ENCODE measurements at regions of chr15 and their contacts with region 1.

Region 1: GRCh38 chr15:76057332-76058000 is 2.3 kb upstream of the TMEM266 start:
- DNase-seq: peak in 7 of 9 donors; percentile 14 to 48 (median 36)
- ATAC-seq: peak; percentile 55
- H3K4me3 ChIP-seq: no peak overlapping the region
- H3K4me3 Mint-ChIP-seq: peak overlapping the region in 5 of 10 donors; percentile 19 to 69 (median 47)
- H3K27ac ChIP-seq: no peak overlapping the region
- H3K27ac Mint-ChIP-seq: peak overlapping the region in 1 of 9 donors; percentile 19
- H3K4me1 ChIP-seq: peaks cover 9 to 12% of the 10 kb centered on the region in 2 donors
- H3K4me1 Mint-ChIP-seq: peaks cover 6 to 31% (median 18%) of the 10 kb centered on the region in 7 donors
- H3K27me3 ChIP-seq: peaks cover 15 to 20% of the 10 kb centered on the region in 2 donors
- H3K27me3 Mint-ChIP-seq: peaks cover 48 to 65% (median 50%) of the 10 kb centered on the region in 5 donors

Region 2: DNA sequence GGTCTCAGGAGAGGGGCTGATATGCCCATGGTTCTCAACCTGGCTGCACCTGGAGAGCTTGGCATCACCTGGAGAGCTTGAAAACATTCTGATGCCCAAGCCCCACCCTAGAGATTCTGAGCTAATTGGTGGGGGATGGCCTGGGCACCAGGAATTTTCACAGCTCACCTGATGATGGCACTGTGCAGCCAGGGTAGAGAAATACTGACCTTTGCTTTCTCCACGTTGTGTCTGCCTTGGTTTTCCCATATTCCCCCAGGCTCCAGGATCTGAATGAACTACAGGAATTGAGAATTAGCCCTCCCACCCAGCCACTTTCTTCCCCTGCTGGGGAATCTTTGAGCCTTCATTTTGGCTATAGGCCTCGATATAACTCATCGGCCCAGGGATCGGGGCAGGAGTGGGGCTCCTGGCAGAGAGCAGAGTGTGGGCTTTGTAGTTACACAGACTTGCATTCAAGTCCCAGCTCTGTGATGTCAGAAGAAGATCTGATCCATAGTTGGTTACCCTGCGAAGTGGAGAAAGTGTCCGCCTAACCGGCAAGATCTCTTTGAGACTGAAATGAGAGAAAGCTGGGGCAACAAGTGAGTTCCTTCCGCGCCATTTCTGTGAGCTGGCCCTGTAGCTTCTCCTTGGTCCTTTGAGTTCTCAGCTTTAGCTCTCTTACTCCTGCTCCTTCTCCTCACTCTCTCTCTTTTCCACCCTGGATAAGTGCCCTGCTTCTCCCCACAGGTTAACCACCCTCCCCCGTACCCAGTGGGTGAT is 247.3 kb before region 1 on chr15:
- CTCF ChIA-PET with region 1: no interaction called
- POLR2A ChIA-PET with region 1: no interaction called
- intact Hi-C with region 1: loop called in 1 of 2 experiments (anchors 5 kb)
- DNase-seq: peak in 1 of 9 donors; percentile 12
- ATAC-seq: peak; percentile 38
- H3K4me3 ChIP-seq: no peak overlapping the region
- H3K4me3 Mint-ChIP-seq: no peak overlapping the region
- H3K27ac ChIP-seq: no peak overlapping the region
- H3K27ac Mint-ChIP-seq: peak overlapping the region in 1 of 9 donors; percentile 56
- H3K4me1 ChIP-seq: no peaks in the 10 kb centered on the region
- H3K4me1 Mint-ChIP-seq: no peaks in the 10 kb centered on the region
- H3K27me3 ChIP-seq: no peaks in the 10 kb centered on the region
- H3K27me3 Mint-ChIP-seq: peaks cover 0 to 21% (median 6%) of the 10 kb centered on the region in 5 donors

Region 3: DNA sequence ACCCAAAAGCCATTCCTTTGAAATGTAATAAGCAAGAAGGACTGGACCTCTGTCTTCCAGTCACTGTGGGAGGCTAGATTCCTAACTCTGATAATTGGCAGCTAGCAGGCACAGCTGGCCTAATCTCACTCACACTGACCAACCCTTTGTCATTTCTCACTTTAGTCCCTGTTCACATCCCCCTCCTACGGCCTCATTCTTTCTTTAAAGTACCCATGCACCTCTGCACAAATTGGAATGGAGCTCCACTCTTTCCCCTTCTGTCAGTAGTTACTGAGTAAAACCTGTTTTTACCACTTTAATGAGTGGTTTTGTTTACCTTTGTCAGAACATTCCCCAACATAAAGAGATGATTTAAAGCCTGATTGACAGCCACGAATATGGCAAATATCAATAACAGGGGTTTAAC is 225.9 kb before region 1 on chr15:
- CTCF ChIA-PET with region 1: no interaction called
- POLR2A ChIA-PET with region 1: no interaction called
- intact Hi-C with region 1: no loop called
- DNase-seq: no peak
- ATAC-seq: no peak
- H3K4me3 ChIP-seq: no peak overlapping the region
- H3K4me3 Mint-ChIP-seq: no peak overlapping the region
- H3K27ac ChIP-seq: no peak overlapping the region
- H3K27ac Mint-ChIP-seq: peak overlapping the region in 1 of 9 donors; percentile 52
- H3K4me1 ChIP-seq: no peaks in the 10 kb centered on the region
- H3K4me1 Mint-ChIP-seq: peaks cover 0 to 27% (median 4%) of the 10 kb centered on the region in 7 donors
- H3K27me3 ChIP-seq: no peaks in the 10 kb centered on the region
- H3K27me3 Mint-ChIP-seq: peaks cover 0 to 7% (median 0%) of the 10 kb centered on the region in 5 donors

Region 4: GRCh38 chr15:76139368-76140073 is 82.1 kb after region 1 on chr15:
- CTCF ChIA-PET with region 1: interaction called, 12 read pairs
- POLR2A ChIA-PET with region 1: no interaction called
- intact Hi-C with region 1: loop called (anchors 1 kb)
- DNase-seq: peak; percentile 38 to 67 (median 58)
- ATAC-seq: peak; percentile 90
- H3K4me3 ChIP-seq: no peak overlapping the region
- H3K4me3 Mint-ChIP-seq: no peak overlapping the region
- H3K27ac ChIP-seq: no peak overlapping the region
- H3K27ac Mint-ChIP-seq: no peak overlapping the region
- H3K4me1 ChIP-seq: no peaks in the 10 kb centered on the region
- H3K4me1 Mint-ChIP-seq: peaks cover 0 to 11% (median 0%) of the 10 kb centered on the region in 7 donors
- H3K27me3 ChIP-seq: no peaks in the 10 kb centered on the region
- H3K27me3 Mint-ChIP-seq: peaks cover 8 to 41% (median 14%) of the 10 kb centered on the region in 5 donors

Region 5: GRCh38 chr15:76150971-76151598 is 93.6 kb after region 1 on chr15:
- CTCF ChIA-PET with region 1: interaction called, 3 read pairs
- POLR2A ChIA-PET with region 1: no interaction called
- intact Hi-C with region 1: loop called in 1 of 2 experiments (anchors 2 kb)
- DNase-seq: peak; percentile 34 to 77 (median 58)
- ATAC-seq: peak; percentile 91
- H3K4me3 ChIP-seq: no peak overlapping the region
- H3K4me3 Mint-ChIP-seq: peak overlapping the region in 4 of 10 donors; percentile 11 to 43 (median 40)
- H3K27ac ChIP-seq: no peak overlapping the region
- H3K27ac Mint-ChIP-seq: no peak overlapping the region
- H3K4me1 ChIP-seq: peaks cover 0 to 4% of the 10 kb centered on the region in 2 donors
- H3K4me1 Mint-ChIP-seq: peaks cover 7 to 15% (median 11%) of the 10 kb centered on the region in 7 donors
- H3K27me3 ChIP-seq: no peaks in the 10 kb centered on the region
- H3K27me3 Mint-ChIP-seq: peaks cover 7 to 21% (median 10%) of the 10 kb centered on the region in 5 donors

Region 6: DNA sequence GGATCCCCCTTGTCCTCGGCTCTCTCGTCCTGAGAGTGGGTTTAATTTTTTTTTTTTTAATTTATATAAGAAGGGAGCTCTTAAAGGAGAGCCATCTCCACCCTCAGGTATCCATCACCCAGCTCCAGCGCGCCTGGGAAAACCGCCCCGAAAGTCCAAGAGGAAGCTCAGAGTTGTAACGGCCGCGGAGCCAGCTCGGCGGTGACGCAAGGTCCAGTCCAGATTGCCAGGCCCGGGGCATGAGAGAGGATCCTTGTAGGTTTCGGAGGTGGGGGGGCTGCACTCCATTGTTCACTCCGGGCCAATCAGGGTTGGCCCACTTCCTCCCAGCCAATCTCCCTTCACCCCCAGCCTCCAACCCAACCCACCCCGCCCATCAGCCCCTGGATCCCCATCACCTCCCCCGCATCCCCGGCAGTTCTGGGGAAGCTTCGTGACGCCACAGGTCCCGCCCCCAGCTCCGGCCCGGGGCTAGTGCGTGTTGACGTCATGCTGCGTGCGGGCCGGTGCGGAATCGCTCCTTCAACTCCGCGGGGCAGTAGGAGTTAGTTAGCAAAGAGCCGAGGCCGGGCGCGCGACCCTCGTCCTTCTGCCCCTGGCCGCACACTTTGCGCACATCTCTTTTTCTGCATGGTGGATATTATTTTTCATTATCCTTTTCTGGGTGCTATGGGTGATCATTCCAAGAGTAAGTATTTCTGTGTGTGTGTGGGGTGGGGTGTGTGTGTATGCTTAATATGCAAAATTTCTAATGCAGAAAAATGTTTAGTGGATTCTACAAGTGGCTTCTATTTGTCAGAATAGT is 279.0 kb after region 1 on chr15 and contains the start of gene ISL2:
- CTCF ChIA-PET with region 1: no interaction called
- POLR2A ChIA-PET with region 1: no interaction called
- intact Hi-C with region 1: loop called in 1 of 2 experiments (anchors 10 kb)
- DNase-seq: peak in 2 of 9 donors; percentile 21 to 83
- ATAC-seq: peak; percentile 52
- H3K4me3 ChIP-seq: peak within 1 kb of the TSS; percentile 28
- H3K4me3 Mint-ChIP-seq: peak within 1 kb of the TSS; percentile 61 to 84 (median 76)
- H3K27ac ChIP-seq: no peak within 1 kb of the TSS
- H3K27ac Mint-ChIP-seq: peak within 1 kb of the TSS in 5 of 9 donors; percentile 5 to 77 (median 39)
- H3K4me1 ChIP-seq: peaks cover 32 to 59% of the 10 kb centered on the region in 2 donors
- H3K4me1 Mint-ChIP-seq: peaks cover 37 to 60% (median 48%) of the 10 kb centered on the region in 7 donors
- H3K27me3 ChIP-seq: peaks cover 11 to 47% of the 10 kb centered on the region in 2 donors
- H3K27me3 Mint-ChIP-seq: peaks cover 73 to 84% (median 75%) of the 10 kb centered on the region in 5 donors
- total RNA-seq, gene ISL2: 0.21 to 0.51 (median 0.27) TPM in 3 of 5 experiments, not detected in the others